Activated CD8-positive, alpha-beta T cell treated with anti-CD3 and anti-CD28 coated beads for 36 hours (primary cell): ENCODE measurements at regions of chr22 and their contacts with region 1.

Region 1: DNA sequence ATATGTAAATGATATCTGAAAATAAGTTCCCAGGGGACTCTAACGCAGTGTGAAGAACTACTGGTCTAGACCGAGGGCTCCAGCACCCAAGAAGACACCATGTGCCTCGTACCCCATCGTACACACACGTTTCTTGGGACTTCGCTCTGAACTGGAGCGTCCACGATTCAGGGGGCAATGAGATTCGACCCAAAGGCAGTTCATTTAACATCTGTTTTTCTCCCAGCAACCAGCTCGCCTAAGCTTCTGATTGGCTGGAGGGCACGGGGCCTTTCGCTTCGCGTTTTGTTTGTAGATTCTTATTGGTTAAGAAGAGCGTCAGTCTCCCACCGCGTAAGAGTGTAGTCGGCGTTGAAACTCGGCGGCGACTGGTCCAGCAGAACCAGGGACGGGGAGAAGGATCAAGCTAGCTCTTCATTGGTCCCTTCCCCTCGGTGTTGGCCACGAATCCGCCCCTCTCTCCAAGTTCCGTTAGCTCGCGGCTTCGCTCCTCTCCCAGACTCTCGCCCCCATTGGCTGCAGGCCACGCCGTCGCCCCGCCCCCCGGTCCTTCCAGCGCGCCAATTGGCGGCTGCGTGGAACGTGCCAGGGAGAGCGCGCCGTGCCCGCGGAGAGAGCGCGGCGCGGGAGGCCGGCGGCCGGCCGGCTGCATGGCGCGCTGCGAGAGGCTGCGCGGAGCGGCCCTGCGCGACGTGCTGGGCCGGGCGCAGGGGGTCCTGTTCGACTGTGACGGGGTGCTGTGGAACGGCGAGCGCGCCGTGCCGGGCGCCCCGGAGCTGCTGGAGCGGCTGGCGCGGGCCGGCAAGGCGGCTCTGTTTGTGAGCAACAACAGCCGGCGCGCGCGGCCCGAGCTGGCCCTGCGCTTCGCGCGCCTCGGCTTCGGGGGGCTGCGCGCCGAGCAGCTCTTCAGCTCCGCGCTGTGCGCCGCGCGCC is at the start of gene PDXP:
- DNase-seq: peak; percentile 98
- ATAC-seq: peak; percentile 97
- H3K4me3 Mint-ChIP-seq: peak within 1 kb of the TSS; percentile 89
- H3K27ac Mint-ChIP-seq: peak within 1 kb of the TSS; percentile 95
- H3K4me1 Mint-ChIP-seq: peaks cover 39% of the 10 kb centered on the region
- H3K27me3 Mint-ChIP-seq: no peaks in the 10 kb centered on the region
- CTCF ChIP-seq: no peak
- total RNA-seq, gene PDXP: 51.3 to 51.5 TPM

Region 2: GRCh38 chr22:37345863-37346504 is 312.4 kb before region 1 on chr22:
- CTCF ChIA-PET with region 1: no interaction called
- POLR2A ChIA-PET with region 1: no interaction called
- intact Hi-C with region 1: no loop called
- DNase-seq: no peak
- ATAC-seq: no peak
- H3K4me3 Mint-ChIP-seq: no peak overlapping the region
- H3K27ac Mint-ChIP-seq: no peak overlapping the region
- H3K4me1 Mint-ChIP-seq: peaks cover 7% of the 10 kb centered on the region
- H3K27me3 Mint-ChIP-seq: no peaks in the 10 kb centered on the region
- CTCF ChIP-seq: no peak

Region 3: DNA sequence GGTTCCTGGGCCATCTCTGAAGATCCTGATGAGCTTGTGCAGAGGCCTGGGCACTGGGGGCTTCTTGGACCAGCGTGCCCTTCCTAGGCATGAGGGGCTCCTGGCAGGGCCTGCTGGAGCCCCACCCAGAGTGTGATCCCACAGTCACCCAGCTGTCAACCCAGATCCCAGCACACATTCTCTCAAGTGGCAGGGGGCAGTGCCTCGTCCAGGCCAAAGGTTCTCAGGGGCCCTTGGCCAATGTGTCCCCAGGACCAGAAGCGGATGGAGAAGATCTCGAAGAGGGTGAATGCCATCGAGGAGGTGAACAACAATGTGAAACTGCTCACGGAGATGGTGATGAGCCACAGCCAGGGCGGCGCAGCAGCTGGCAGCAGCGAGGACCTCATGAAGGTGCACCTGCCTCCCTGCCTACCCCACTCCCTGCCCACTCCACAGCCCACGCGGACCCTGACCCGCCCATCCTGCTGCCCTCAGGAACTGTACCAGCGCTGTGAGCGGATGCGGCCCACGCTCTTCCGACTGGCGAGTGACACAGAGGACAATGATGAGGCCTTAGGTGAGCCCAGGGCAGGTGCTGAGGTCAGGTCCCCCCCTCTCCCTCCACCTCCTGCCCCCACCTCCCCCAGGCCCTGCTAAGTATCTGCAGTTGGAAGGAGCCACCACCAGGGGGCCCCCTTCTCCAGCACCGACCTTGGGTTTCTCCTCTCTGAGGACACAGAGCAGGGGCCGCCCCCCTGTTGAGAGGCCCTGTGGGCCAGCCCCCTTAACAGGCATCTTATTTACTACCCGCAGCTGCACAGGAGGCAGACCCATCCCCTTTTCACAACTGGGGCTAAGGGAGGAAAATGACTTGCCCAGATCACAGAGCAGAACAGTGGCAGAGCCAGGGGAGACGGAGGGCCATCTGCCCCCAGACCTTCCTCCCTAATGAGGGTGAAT is 35.1 kb before region 1 on chr22:
- CTCF ChIA-PET with region 1: interaction called, 1,770 read pairs
- POLR2A ChIA-PET with region 1: interaction called, 16 read pairs
- intact Hi-C with region 1: no loop called
- DNase-seq: peak; percentile 90
- ATAC-seq: peak; percentile 84
- H3K4me3 Mint-ChIP-seq: no peak overlapping the region
- H3K27ac Mint-ChIP-seq: peak overlapping the region; percentile 90
- H3K4me1 Mint-ChIP-seq: peaks cover 48% of the 10 kb centered on the region
- H3K27me3 Mint-ChIP-seq: no peaks in the 10 kb centered on the region
- CTCF ChIP-seq: peak; percentile 81

Region 4: GRCh38 chr22:37633625-37634416 is 24.6 kb before region 1 on chr22:
- CTCF ChIA-PET with region 1: interaction called, 1,770 read pairs
- POLR2A ChIA-PET with region 1: interaction called, 51 read pairs
- intact Hi-C with region 1: no loop called
- DNase-seq: peak; percentile 90
- ATAC-seq: peak; percentile 66
- H3K4me3 Mint-ChIP-seq: peak overlapping the region; percentile 69
- H3K27ac Mint-ChIP-seq: peak overlapping the region; percentile 88
- H3K4me1 Mint-ChIP-seq: peaks cover 79% of the 10 kb centered on the region
- H3K27me3 Mint-ChIP-seq: no peaks in the 10 kb centered on the region
- CTCF ChIP-seq: peak; percentile 20

Region 5: GRCh38 chr22:37703906-37704305 is 45.5 kb after region 1 on chr22:
- CTCF ChIA-PET with region 1: no interaction called
- POLR2A ChIA-PET with region 1: no interaction called
- intact Hi-C with region 1: no loop called
- DNase-seq: no peak
- ATAC-seq: no peak
- H3K4me3 Mint-ChIP-seq: no peak overlapping the region
- H3K27ac Mint-ChIP-seq: no peak overlapping the region
- H3K4me1 Mint-ChIP-seq: no peaks in the 10 kb centered on the region
- H3K27me3 Mint-ChIP-seq: no peaks in the 10 kb centered on the region
- CTCF ChIP-seq: no peak

Region 6: DNA sequence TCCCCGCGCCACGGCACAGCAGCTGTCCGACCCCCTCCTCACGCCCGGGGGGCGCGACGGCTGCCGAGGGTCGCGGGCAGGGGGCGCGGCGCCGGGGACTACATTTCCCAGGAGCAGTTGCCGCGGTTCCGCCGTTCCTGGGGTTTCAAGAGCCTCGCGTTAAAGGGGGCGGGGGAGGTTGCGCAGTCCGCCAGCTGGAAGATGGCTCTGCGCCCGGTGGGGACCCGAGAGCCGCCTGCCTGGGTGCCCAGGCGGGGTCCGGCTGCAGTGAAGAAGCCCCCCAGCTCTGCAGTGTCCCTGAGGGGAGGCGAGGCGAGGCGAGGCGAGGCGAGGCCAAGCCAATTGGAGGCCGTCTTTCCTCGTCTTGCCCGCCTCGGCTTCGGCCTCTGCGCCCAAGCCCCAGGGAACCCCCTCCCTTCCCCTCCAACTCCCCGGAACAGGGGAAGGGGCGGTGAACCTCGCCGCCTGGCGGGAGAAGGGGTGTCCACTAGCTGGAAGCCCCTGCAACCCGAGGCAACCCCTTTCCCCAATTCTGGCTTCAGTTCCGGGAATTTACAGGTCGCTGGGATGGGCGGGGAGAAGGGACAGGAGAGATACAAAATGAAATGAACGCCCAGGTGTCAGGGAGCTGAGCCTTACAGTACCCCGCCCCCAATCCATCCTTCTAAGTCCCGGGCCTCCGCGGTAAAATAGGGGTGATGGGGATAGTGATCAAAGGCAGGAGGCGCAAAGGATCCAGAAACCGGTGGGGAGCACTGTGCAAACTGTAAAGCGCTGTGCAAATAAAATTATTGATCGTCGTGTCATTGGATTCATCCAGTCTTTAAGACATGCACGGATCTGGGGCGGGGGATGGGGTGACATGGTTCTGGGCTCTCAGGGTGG is 144.2 kb after region 1 on chr22:
- CTCF ChIA-PET with region 1: no interaction called
- POLR2A ChIA-PET with region 1: no interaction called
- intact Hi-C with region 1: no loop called
- DNase-seq: peak; percentile 42
- ATAC-seq: no peak
- H3K4me3 Mint-ChIP-seq: peak overlapping the region; percentile 59
- H3K27ac Mint-ChIP-seq: no peak overlapping the region
- H3K4me1 Mint-ChIP-seq: peaks cover 30% of the 10 kb centered on the region
- H3K27me3 Mint-ChIP-seq: peaks cover 40% of the 10 kb centered on the region
- CTCF ChIP-seq: no peak

Region 7: GRCh38 chr22:37953437-37954179 is 295.2 kb after region 1 on chr22 and contains the starts of genes C22orf23 and POLR2F:
- CTCF ChIA-PET with region 1: no interaction called
- POLR2A ChIA-PET with region 1: no interaction called
- intact Hi-C with region 1: no loop called
- DNase-seq: peak; percentile 98
- ATAC-seq: peak; percentile 96
- H3K4me3 Mint-ChIP-seq: peak within 1 kb of the TSS; percentile 97
- H3K27ac Mint-ChIP-seq: peak within 1 kb of the TSS; percentile 97
- H3K4me1 Mint-ChIP-seq: peaks cover 30% of the 10 kb centered on the region
- H3K27me3 Mint-ChIP-seq: peaks cover 14% of the 10 kb centered on the region
- CTCF ChIP-seq: no peak
- total RNA-seq, gene C22orf23: not detected
- total RNA-seq, gene POLR2F: 82.2 to 85.4 TPM